Caco-2 (cell line): ENCODE measurements at regions of chr10 and their contacts with region 1.

Region 1: DNA sequence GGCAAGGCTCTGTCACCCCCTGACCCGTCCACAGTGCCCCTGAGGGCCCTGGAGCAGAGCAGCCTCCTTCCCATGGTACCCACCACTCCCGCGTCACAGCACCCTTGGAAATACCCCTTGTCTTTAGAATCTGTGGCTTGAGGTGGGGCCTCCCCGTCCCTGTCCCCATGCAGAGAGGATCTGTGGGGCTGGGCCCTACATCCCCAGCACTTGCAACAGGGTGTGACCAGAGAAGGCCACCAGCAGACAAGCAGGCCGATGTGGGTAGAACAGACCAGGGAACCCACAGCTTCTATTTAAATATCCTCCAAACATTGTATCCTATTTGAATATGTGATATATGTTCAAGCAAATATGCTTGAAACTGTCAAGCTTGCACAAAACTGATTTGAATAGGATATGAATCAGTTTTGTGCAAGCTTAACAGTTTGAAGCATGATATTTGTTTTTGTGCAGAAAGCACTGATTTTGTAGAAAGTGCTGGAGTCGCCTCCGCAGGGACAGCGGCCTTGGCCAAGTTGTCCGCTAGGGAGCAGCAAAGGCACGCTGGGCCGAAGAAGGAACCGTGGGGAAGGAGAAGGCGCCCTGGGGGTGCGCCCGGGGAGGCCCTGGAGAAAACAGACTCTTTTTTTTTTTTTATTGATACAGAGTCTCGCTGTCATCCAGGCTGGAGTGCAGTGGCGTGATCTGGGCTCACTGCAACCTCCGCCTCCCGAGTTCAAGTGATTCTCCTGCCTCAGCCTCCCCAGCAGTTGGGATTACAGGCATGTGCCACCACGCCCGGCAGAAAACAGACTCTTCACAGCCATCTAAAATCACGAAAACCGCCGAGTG is 2.2 kb downstream of the CFAP46 start:
- DNase-seq: peak; percentile 73 to 87
- H3K4me3 ChIP-seq: no peak overlapping the region
- H3K4me3 Mint-ChIP-seq: no peak overlapping the region
- H3K27ac Mint-ChIP-seq: no peak overlapping the region
- H3K4me1 ChIP-seq: peaks cover 14% of the 10 kb centered on the region
- H3K4me1 Mint-ChIP-seq: peaks cover 7% of the 10 kb centered on the region
- H3K27me3 ChIP-seq: no peaks in the 10 kb centered on the region
- H3K27me3 Mint-ChIP-seq: no peaks in the 10 kb centered on the region
- CTCF ChIP-seq: peak; percentile 99

Region 2: GRCh38 chr10:133045556-133046389 is 105.6 kb after region 1 on chr10:
- CTCF ChIA-PET with region 1: no interaction called
- POLR2A ChIA-PET with region 1: no interaction called
- intact Hi-C with region 1: loop called (anchors 5 kb)
- DNase-seq: no peak
- H3K4me3 ChIP-seq: no peak overlapping the region
- H3K4me3 Mint-ChIP-seq: no peak overlapping the region
- H3K27ac Mint-ChIP-seq: no peak overlapping the region
- H3K4me1 ChIP-seq: no peaks in the 10 kb centered on the region
- H3K4me1 Mint-ChIP-seq: no peaks in the 10 kb centered on the region
- H3K27me3 ChIP-seq: no peaks in the 10 kb centered on the region
- H3K27me3 Mint-ChIP-seq: no peaks in the 10 kb centered on the region
- CTCF ChIP-seq: no peak

Region 3: DNA sequence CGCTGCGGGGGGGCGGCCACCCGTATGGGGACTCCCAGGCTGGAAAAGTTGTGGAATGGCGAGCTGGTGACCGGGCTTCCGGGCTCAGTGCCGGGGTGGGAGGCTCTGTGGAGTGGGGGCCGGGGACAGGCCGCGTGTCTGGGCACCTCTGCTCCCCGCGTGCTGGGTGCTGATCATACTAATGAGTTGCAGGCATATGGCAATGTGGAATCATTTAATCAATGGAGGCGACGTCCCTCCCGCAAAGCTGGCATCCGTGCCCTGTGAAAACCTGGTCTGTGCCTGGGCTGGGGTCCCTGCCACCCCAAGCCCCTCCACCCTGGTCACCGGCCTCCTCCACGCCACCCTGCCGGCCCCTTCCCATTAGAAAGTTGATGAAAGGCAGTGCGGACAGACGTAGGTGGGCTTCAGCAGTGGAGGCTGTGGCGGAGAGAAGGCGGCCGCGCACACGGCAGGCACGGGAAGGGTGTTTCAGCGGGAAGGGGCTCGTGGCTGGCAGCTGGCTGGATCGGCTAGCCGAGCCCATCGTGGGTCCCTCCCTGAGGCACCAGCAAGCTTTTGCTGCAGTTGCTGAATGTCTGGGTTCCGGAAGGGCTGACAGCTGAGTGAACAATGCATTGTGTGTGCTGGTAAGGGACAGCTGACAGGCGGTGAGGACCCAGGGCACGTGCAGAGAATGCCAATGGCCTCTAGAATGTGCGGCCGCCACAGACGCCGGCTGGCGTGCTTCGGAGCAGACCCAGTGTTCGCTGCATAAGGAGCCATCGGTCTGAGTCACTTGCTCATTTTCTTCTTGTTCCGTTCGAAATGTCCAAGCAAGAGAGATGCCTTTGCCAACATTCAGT is 149.0 kb after region 1 on chr10:
- CTCF ChIA-PET with region 1: no interaction called
- POLR2A ChIA-PET with region 1: no interaction called
- intact Hi-C with region 1: loop called (anchors 1 kb)
- DNase-seq: no peak
- H3K4me3 ChIP-seq: no peak overlapping the region
- H3K4me3 Mint-ChIP-seq: no peak overlapping the region
- H3K27ac Mint-ChIP-seq: no peak overlapping the region
- H3K4me1 ChIP-seq: peaks cover 14% of the 10 kb centered on the region; the same call in 1 of the 2 replicates
- H3K4me1 Mint-ChIP-seq: no peaks in the 10 kb centered on the region
- H3K27me3 ChIP-seq: peaks cover 7% of the 10 kb centered on the region
- H3K27me3 Mint-ChIP-seq: peaks cover 43% of the 10 kb centered on the region
- CTCF ChIP-seq: no peak

Region 4: DNA sequence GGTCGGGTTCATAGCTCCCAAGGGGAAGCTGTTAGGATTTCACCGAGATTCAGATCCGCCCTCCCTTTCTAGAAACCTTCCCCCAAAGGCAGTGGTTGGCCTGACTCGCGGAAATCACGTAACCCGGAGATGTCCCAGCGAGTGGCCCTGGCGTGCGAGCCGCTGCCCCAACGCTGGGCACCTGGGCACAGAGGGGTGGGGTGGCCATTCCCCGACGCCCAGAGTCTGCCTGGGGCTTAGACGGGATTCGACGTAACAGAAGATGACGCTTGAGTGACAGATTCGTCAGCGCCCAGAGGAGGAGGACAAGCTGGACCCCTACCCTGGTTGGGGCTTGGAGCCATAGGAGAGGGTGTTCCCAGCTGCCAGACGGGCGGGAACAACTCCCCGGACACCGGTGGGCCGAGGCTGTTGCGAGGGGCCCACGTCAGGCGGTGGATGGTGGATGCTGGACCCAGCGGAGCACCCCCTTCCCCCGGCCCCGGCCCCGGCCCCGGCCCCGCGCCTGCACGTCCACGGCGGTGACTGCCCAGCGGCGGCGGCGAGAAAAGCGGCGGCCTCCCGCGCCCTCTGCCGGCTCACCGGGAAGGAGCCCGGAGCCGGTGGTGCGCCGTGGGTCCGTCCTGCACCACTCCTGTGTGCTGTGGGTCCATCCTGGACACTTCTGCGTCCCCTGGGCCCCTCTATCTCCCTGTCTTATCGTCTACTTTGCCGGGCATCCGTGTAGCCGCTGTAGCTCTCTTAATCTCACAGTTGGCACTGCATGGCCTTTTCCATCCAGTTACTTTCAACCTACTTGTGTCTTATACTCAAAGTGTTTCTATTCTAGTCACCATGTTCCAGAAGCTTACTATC is 184.4 kb after region 1 on chr10:
- CTCF ChIA-PET with region 1: interaction called, 11 read pairs
- POLR2A ChIA-PET with region 1: interaction called, 7 read pairs
- intact Hi-C with region 1: loop called (anchors 1 kb)
- DNase-seq: peak; percentile 38 to 84
- H3K4me3 ChIP-seq: no peak overlapping the region
- H3K4me3 Mint-ChIP-seq: no peak overlapping the region
- H3K27ac Mint-ChIP-seq: no peak overlapping the region
- H3K4me1 ChIP-seq: no peaks in the 10 kb centered on the region; the same call in 1 of the 2 replicates
- H3K4me1 Mint-ChIP-seq: peaks cover 7% of the 10 kb centered on the region
- H3K27me3 ChIP-seq: no peaks in the 10 kb centered on the region; the same call in 1 of the 2 replicates
- H3K27me3 Mint-ChIP-seq: peaks cover 13% of the 10 kb centered on the region
- CTCF ChIP-seq: peak; percentile 75 to 97